ENCODE measurements at regions of chr6 and their contacts with region 1.

Region 1: DNA sequence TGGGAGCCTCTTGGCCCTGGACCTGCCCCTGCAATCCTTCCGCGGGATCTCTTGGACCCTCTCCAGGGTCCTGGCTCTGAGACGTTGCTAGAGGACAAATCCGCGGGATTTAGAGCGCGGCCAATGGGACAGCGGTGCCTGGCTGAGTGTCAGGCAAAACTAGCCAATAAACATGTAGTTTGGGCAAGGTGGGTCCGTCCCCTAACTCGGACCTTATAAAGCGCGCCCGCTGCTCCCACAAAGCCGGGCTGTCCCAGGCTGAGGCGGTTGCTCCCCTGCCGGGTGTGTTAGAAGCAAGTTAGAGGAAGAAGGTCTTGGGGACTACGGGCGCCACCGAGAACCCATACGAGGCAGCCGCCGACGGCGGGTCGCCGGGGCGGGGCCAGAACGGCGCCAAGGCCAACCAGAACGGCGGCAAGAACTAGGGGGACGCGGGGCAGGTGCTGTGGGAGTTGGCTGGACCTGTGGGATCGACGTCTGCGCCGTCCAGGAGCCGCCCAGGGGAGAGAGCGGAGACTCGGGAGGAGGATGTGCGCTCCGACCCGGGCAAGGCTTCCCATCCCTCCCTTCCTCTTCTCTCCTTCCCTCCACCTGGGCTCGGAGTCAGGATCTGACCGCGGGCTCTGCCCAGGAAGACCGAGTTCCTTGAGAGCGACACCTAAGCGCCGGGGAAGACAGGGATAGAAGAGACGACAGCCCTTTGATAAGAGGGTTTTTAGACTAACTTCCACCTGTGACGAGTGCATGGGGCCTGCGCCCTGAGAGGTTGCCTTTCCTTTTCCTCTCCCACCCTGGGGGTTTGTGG is 6.5 kb upstream of the TMEM14A start:
- DNase-seq: peak; percentile 74 to 93 (median 85)

Region 2: GRCh38 chr6:52419809-52420670 is 244.3 kb before region 1 on chr6 and contains the start of gene EFHC1:
- intact Hi-C with region 1: loop called (anchors 1 kb)
- DNase-seq: peak; percentile 95 to 99 (median 98)

Measured in head of caudate nucleus (tissue), 42 donors.